ENCODE measurements at regions of chr16 and their contacts with region 1.

Region 1: GRCh38 chr16:11297492-11298142 is 16.5 kb upstream of the PRM1 start:
- DNase-seq: peak; percentile 71
- H3K4me3 Mint-ChIP-seq: no peak overlapping the region
- H3K27ac Mint-ChIP-seq: no peak overlapping the region
- H3K4me1 Mint-ChIP-seq: peaks cover 26% of the 10 kb centered on the region
- H3K27me3 Mint-ChIP-seq: no peaks in the 10 kb centered on the region

Region 2: GRCh38 chr16:11175787-11176341 is 121.8 kb before region 1 on chr16:
- intact Hi-C with region 1: no loop called
- DNase-seq: peak; percentile 35
- H3K4me3 Mint-ChIP-seq: no peak overlapping the region
- H3K27ac Mint-ChIP-seq: peak overlapping the region; percentile 83
- H3K4me1 Mint-ChIP-seq: peaks cover 79% of the 10 kb centered on the region
- H3K27me3 Mint-ChIP-seq: no peaks in the 10 kb centered on the region

Region 3: GRCh38 chr16:11263737-11264136 is 33.9 kb before region 1 on chr16:
- intact Hi-C with region 1: loop called (anchors 5 kb)
- DNase-seq: peak; percentile 51
- H3K4me3 Mint-ChIP-seq: peak overlapping the region; percentile 48
- H3K27ac Mint-ChIP-seq: peak overlapping the region; percentile 84
- H3K4me1 Mint-ChIP-seq: peaks cover 33% of the 10 kb centered on the region
- H3K27me3 Mint-ChIP-seq: no peaks in the 10 kb centered on the region

Measured in activated T-helper 2 cell treated with anti-CD3 and anti-CD28 coated beads, Interferon-gamma antibody, Interleukin-2, Interleukin-4, amounts not matched to agents 10 μg/mL and 5 μg/mL and 100 μg/mL, durations not matched to agents 14 hours and 24 hours and 36 hours (primary cell).